Activated CD8-positive, alpha-beta T cell treated with anti-CD3 and anti-CD28 coated beads, Interleukin-2, amount 10 ng/mL, durations not matched to agents 7 days and 5 days (primary cell): ENCODE measurements at regions of chr14 and their contacts with region 1.

Region 1: GRCh38 chr14:99729991-99730868 is 46.1 kb downstream of the CYP46A1 start:
- DNase-seq: peak; percentile 76
- ATAC-seq: peak; percentile 82
- H3K4me3 Mint-ChIP-seq: no peak overlapping the region
- H3K27ac Mint-ChIP-seq: no peak overlapping the region
- H3K4me1 Mint-ChIP-seq: no peaks in the 10 kb centered on the region
- H3K27me3 Mint-ChIP-seq: peaks cover 19% of the 10 kb centered on the region

Region 2: GRCh38 chr14:99698642-99699041 is 31.6 kb before region 1 on chr14:
- CTCF ChIA-PET with region 1: no interaction called
- POLR2A ChIA-PET with region 1: no interaction called
- DNase-seq: peak; percentile 15
- ATAC-seq: no peak
- H3K4me3 Mint-ChIP-seq: no peak overlapping the region
- H3K27ac Mint-ChIP-seq: no peak overlapping the region
- H3K4me1 Mint-ChIP-seq: peaks cover 11% of the 10 kb centered on the region
- H3K27me3 Mint-ChIP-seq: peaks cover 15% of the 10 kb centered on the region

Region 3: DNA sequence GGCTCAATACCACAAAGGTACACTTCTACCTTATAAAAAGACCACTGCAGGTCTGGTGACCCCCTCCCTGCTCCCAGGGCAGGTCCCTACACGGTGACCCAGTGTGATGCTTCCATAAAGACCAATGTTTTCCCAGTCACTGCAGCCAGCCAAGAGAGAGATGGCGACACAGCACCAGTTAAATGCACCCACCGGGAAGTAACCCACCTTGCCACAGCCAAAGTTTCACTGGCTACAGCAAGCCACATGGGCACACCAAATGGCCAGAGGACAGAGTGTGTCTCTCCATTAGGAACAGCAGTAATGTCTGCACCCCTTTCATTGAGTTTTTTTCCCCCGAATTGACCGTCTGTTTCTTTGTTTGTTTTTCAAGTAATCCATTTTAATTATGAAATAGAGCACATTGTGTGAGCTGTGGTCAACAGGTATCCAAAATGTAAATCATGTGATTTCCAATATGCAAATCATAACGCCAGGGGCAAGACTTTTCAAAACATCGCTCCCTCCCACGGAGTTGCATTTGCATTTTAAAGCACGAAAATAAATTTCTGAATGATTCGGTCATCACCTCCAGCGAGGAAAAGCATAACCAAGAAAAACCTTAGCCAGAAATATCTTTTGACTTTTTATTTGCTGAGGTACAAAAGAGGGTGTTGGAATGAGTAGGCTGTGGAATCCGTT is 14.1 kb after region 1 on chr14:
- CTCF ChIA-PET with region 1: interaction called, 11 read pairs
- POLR2A ChIA-PET with region 1: no interaction called
- DNase-seq: no peak
- ATAC-seq: no peak
- H3K4me3 Mint-ChIP-seq: no peak overlapping the region
- H3K27ac Mint-ChIP-seq: no peak overlapping the region
- H3K4me1 Mint-ChIP-seq: peaks cover 9% of the 10 kb centered on the region
- H3K27me3 Mint-ChIP-seq: peaks cover 12% of the 10 kb centered on the region